GM12878 (cell line): ENCODE measurements at regions of chr16 and their contacts with region 1.

Region 1: DNA sequence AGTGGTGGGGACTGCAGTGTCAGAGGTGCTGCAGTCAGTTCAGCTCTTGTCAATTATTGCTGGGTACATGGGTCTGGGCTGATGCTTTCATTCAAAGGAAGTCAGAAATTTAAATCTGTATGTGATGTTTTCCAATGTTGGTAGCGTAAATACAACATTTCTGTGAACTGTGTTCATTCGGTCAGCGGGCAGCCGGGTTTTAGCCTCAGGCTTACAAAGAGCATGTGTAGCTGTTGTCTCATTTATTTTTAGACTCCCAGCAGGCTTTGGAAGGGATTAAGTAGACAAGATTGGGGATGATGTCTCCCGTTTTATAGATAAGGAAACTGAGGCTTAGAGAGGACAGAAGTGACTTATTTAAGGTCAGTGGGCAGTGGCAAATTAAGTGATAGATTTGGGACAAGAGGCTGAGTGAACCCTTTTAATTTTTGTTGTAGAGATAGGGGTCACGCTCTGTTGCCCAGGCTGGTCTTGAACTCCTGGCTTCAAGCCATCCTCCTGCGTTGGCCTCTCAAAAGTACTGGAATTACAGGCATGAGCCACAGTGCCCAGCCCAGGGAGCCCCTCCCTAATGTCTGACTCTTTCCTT is 8.1 kb downstream of the AQP8 start:
- DNase-seq: no peak
- ATAC-seq: no peak; the same call in 2 of the 3 replicates
- H3K4me3 ChIP-seq: no peak overlapping the region
- H3K27ac ChIP-seq: no peak overlapping the region
- H3K4me1 ChIP-seq: no peaks in the 10 kb centered on the region
- H3K27me3 ChIP-seq: no peaks in the 10 kb centered on the region
- CTCF ChIP-seq: no peak
- EP300 ChIP-seq: no peak
- POLR2A ChIP-seq: no peak
- RAD21 ChIP-seq: no peak

Region 2: GRCh38 chr16:24516900-24517669 is 707.7 kb before region 1 on chr16:
- CTCF ChIA-PET with region 1: interaction called, 11 read pairs
- POLR2A ChIA-PET with region 1: no interaction called
- RAD21 ChIA-PET with region 1: interaction called, 5 read pairs
- SMC1A ChIA-PET with region 1: no interaction called
- in situ Hi-C with region 1: loop called (anchors 10 kb)
- intact Hi-C with region 1: no loop called
- DNase-seq: peak; percentile 38
- ATAC-seq: peak; percentile 90
- H3K4me3 ChIP-seq: no peak overlapping the region
- H3K27ac ChIP-seq: no peak overlapping the region
- H3K4me1 ChIP-seq: no peaks in the 10 kb centered on the region
- H3K27me3 ChIP-seq: no peaks in the 10 kb centered on the region; a peak in 1 of 4 replicates
- CTCF ChIP-seq: peak; percentile 90 to 92 (median 91)
- EP300 ChIP-seq: no peak
- POLR2A ChIP-seq: no peak
- RAD21 ChIP-seq: peak; percentile 91

Region 3: GRCh38 chr16:24975428-24975889 is 249.4 kb before region 1 on chr16:
- CTCF ChIA-PET with region 1: interaction called, 5 read pairs
- POLR2A ChIA-PET with region 1: no interaction called
- RAD21 ChIA-PET with region 1: interaction called, 3 read pairs
- SMC1A ChIA-PET with region 1: interaction called, 4 read pairs
- in situ Hi-C with region 1: loop called (anchors 10 kb)
- intact Hi-C with region 1: no loop called
- DNase-seq: peak; percentile 76
- ATAC-seq: peak; percentile 77
- H3K4me3 ChIP-seq: peak overlapping the region; percentile 22; the same call in 1 of the 2 replicates
- H3K27ac ChIP-seq: peak overlapping the region; percentile 74
- H3K4me1 ChIP-seq: peaks cover 77% of the 10 kb centered on the region
- H3K27me3 ChIP-seq: no peaks in the 10 kb centered on the region
- CTCF ChIP-seq: no peak
- EP300 ChIP-seq: peak; percentile 71; a peak in 2 of 4 replicates
- POLR2A ChIP-seq: no peak
- RAD21 ChIP-seq: no peak

Region 4: DNA sequence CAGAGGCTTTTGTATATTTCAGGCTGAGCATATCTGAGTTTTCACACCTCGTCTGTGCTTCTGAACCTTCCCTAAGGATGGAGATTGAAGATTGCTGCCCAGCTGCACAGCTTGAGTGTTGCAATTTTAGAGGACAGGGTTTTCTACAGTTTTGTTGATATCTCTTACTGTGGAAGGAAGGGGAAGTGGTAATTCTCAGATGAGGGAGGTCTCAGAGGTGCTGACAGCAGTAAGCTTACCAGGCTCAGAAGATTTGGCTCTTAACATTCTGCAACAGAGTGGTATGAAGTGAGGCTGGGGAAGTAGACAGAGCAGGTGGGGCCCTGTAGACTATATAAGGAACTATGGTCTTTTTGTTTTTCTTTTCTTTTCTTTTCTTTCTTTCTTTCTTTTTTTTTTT is 163.9 kb before region 1 on chr16:
- CTCF ChIA-PET with region 1: interaction called, 42 read pairs
- POLR2A ChIA-PET with region 1: no interaction called
- RAD21 ChIA-PET with region 1: interaction called, 12 read pairs
- SMC1A ChIA-PET with region 1: interaction called, 20 read pairs
- in situ Hi-C with region 1: loop called (anchors 5 kb)
- intact Hi-C with region 1: no loop called
- DNase-seq: no peak
- ATAC-seq: peak; percentile 69
- H3K4me3 ChIP-seq: no peak overlapping the region
- H3K27ac ChIP-seq: no peak overlapping the region
- H3K4me1 ChIP-seq: peaks cover 18% of the 10 kb centered on the region
- H3K27me3 ChIP-seq: no peaks in the 10 kb centered on the region
- CTCF ChIP-seq: no peak
- EP300 ChIP-seq: no peak
- POLR2A ChIP-seq: no peak
- RAD21 ChIP-seq: no peak

Region 5: DNA sequence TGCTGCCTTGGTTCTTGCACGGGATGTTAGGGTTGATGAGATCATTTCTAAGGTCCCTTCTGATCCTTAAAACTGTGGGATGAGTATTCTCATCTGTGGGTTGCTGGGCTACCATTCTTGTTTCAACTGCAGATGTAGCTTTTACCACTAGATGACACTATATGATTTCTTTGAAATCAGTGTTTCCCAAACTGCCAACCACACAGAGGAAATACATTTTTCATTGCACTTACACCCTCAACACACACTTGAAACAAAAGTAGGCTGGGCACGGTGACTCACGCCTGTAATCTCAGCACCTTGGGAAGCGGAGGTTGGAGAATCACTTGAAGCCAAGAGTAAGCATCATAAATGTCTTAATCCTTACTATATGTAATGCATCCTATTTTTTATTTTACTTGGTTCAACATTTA is 98.0 kb before region 1 on chr16:
- CTCF ChIA-PET with region 1: interaction called, 15 read pairs
- POLR2A ChIA-PET with region 1: interaction called, 9 read pairs
- RAD21 ChIA-PET with region 1: interaction called, 13 read pairs
- SMC1A ChIA-PET with region 1: interaction called, 10 read pairs
- in situ Hi-C with region 1: no loop called
- intact Hi-C with region 1: loop called (anchors 1 kb)
- DNase-seq: no peak
- ATAC-seq: peak; percentile 68
- H3K4me3 ChIP-seq: no peak overlapping the region
- H3K27ac ChIP-seq: no peak overlapping the region
- H3K4me1 ChIP-seq: no peaks in the 10 kb centered on the region
- H3K27me3 ChIP-seq: no peaks in the 10 kb centered on the region
- CTCF ChIP-seq: peak; percentile 52 to 65 (median 64); a peak in 5 of 6 replicates
- EP300 ChIP-seq: no peak
- POLR2A ChIP-seq: no peak
- RAD21 ChIP-seq: peak; percentile 57

Region 6: GRCh38 chr16:25172821-25173220 is 52.0 kb before region 1 on chr16:
- CTCF ChIA-PET with region 1: no interaction called
- POLR2A ChIA-PET with region 1: no interaction called
- RAD21 ChIA-PET with region 1: no interaction called
- SMC1A ChIA-PET with region 1: no interaction called
- in situ Hi-C with region 1: no loop called
- intact Hi-C with region 1: no loop called
- DNase-seq: no peak
- ATAC-seq: no peak
- H3K4me3 ChIP-seq: no peak overlapping the region
- H3K27ac ChIP-seq: no peak overlapping the region
- H3K4me1 ChIP-seq: no peaks in the 10 kb centered on the region
- H3K27me3 ChIP-seq: no peaks in the 10 kb centered on the region
- CTCF ChIP-seq: no peak
- EP300 ChIP-seq: no peak
- POLR2A ChIP-seq: no peak
- RAD21 ChIP-seq: no peak

Region 7: GRCh38 chr16:25317732-25318316 is 93.0 kb after region 1 on chr16:
- CTCF ChIA-PET with region 1: no interaction called
- POLR2A ChIA-PET with region 1: no interaction called
- RAD21 ChIA-PET with region 1: no interaction called
- SMC1A ChIA-PET with region 1: no interaction called
- in situ Hi-C with region 1: no loop called
- intact Hi-C with region 1: no loop called
- DNase-seq: no peak
- ATAC-seq: no peak
- H3K4me3 ChIP-seq: no peak overlapping the region
- H3K27ac ChIP-seq: no peak overlapping the region
- H3K4me1 ChIP-seq: no peaks in the 10 kb centered on the region
- H3K27me3 ChIP-seq: no peaks in the 10 kb centered on the region
- CTCF ChIP-seq: no peak
- EP300 ChIP-seq: no peak
- POLR2A ChIP-seq: no peak
- RAD21 ChIP-seq: no peak